ENCODE measurements at regions of chr5 and their contacts with region 1.

Region 1: GRCh38 chr5:96957254-96958049 is 21.6 kb downstream of the LNPEP start:
- DNase-seq: no peak
- H3K4me3 Mint-ChIP-seq: peak overlapping the region; percentile 63
- H3K27ac Mint-ChIP-seq: peak overlapping the region; percentile 65
- H3K4me1 Mint-ChIP-seq: peaks cover 71% of the 10 kb centered on the region
- H3K27me3 Mint-ChIP-seq: no peaks in the 10 kb centered on the region

Region 2: DNA sequence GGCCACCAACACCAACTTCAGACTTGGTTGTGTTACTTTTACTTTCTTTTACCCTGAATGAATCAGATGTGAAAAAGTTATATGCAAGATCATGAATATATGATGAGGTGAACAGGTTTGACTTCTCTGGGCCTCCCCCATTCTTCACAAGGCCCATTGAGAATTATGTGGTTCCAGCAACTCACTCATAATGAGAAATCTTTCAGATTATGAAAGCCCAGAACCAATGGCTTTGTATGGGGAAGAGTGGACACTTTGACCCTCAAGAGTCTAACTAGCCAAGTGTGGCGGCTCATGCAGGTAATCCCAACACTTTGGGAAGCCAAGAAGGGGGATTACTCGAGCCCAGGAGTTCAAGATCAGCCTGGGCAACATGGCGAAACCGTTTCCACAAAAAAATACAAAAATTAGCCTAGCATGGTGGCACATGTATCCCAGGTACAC is 37.7 kb before region 1 on chr5:
- intact Hi-C with region 1: loop called (anchors 1 kb)
- DNase-seq: no peak
- H3K4me3 Mint-ChIP-seq: no peak overlapping the region
- H3K27ac Mint-ChIP-seq: no peak overlapping the region
- H3K4me1 Mint-ChIP-seq: peaks cover 41% of the 10 kb centered on the region
- H3K27me3 Mint-ChIP-seq: no peaks in the 10 kb centered on the region

Region 3: DNA sequence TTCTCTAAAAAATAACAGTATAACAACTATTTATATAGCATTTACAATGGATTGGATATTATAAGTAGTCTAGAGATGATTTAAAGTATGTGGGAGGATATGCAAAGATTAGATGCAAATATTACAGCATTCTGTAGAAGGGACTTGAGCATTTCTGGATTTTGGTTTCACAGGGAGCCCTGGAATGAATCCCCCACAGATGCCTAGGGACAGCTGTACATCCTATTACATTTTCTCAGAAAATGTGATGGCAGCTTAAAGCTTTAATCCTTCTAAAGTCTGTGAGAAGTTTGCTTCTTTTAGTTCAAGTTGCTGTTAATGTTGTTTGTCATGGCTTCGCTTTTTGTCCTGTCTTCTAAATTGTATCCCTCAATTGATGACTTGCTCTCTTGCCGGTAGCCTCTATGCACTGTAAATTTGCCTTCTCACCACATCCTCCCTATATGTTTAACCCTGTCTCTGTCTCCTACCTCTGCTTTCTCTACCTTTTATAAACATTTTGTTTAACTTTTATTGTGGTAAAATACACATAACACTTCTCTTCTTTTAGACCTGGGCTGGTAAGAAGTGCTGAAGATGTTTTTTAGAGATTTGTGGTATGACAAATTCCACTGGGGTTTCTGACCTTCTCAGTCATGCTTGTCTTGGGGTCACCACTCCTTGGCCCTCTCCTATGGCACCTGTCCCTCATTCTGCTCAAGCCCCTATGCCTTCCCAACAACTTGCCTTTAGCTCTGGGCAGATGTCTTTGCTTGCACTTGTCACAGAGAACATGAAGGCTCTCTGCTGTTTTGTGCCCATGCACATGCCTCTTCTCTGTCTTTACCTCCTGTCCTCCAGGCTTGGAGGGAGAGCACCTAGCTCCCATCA is 16.3 kb after region 1 on chr5:
- intact Hi-C with region 1: loop called (anchors 2 kb)
- DNase-seq: no peak
- H3K4me3 Mint-ChIP-seq: peak overlapping the region; percentile 34
- H3K27ac Mint-ChIP-seq: peak overlapping the region; percentile 27
- H3K4me1 Mint-ChIP-seq: peaks cover 60% of the 10 kb centered on the region
- H3K27me3 Mint-ChIP-seq: no peaks in the 10 kb centered on the region

Region 4: DNA sequence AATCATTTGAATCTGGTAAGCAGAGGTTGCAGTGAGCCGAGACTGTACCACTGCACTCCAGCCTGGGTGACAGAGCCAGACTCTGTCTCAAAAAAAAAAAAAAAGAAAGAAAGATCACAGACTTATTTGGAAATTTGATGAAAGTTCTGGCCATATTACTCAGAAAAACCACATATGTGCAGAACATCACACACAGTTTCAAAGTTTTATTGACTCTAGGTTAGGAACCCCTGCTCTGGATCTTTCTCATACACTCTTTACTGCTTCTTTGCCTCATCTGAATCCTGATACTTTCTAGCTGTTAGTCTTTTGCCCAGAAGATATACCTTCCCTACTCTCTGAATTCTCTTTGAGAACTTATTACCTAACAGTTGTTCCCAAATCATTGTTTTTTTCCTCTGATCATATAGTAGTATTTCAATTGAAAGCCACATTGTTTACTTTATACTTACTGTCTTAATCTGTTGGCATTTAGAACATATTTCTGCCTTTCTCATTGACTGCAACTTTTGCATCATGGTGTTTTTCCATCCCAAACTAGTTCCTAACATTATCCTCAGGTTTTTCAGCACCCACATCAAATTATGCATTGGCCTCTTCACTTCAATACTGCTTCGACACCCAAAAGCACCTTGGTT is 47.1 kb after region 1 on chr5:
- intact Hi-C with region 1: loop called (anchors 2 kb)
- DNase-seq: no peak
- H3K4me3 Mint-ChIP-seq: no peak overlapping the region
- H3K27ac Mint-ChIP-seq: peak overlapping the region; percentile 32
- H3K4me1 Mint-ChIP-seq: peaks cover 15% of the 10 kb centered on the region
- H3K27me3 Mint-ChIP-seq: no peaks in the 10 kb centered on the region

Region 5: DNA sequence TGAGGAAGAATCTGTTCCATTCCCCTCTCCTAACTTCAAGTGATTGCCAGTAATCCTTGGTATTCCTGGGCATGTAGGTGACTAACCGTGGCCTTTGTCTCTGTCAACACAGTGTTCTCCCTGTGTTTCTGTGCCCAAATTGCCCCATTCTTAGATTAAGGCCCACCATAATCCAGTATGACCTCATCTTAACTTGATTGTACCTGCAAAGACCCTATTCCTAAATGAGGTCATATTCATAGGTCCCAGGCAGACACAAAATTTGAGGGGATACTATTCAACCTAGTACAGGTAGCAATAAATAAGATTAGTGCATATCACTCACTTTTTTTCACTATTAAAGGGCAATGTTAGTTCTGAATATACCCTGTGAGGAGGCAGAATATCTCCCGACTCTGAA is 60.4 kb after region 1 on chr5:
- intact Hi-C with region 1: no loop called
- DNase-seq: no peak
- H3K4me3 Mint-ChIP-seq: no peak overlapping the region
- H3K27ac Mint-ChIP-seq: no peak overlapping the region
- H3K4me1 Mint-ChIP-seq: peaks cover 15% of the 10 kb centered on the region
- H3K27me3 Mint-ChIP-seq: no peaks in the 10 kb centered on the region

Region 6: DNA sequence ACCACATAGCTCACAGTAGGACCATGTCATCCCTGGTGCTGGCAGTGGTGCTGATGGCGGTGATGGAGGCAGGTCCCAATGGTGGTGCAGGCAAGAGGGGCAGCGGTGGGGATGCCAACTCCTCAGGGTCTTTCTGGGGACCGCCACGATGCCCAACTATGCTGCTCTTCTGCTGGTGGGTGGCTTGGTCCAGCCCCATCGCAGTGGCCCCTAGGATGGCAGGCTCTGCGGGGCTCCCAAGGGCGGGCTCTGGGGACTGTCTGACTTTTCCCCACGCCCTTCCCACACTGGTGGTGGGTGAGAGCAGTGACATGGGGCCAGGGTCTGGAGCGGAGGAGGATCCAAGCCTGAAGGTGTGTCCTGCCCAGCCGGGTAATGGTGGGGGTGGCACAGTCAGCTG is 514.5 kb after region 1 on chr5:
- intact Hi-C with region 1: no loop called
- DNase-seq: no peak
- H3K4me3 Mint-ChIP-seq: no peak overlapping the region
- H3K27ac Mint-ChIP-seq: no peak overlapping the region
- H3K4me1 Mint-ChIP-seq: no peaks in the 10 kb centered on the region
- H3K27me3 Mint-ChIP-seq: no peaks in the 10 kb centered on the region